Breast epithelium (tissue), 4 donors: ENCODE measurements at regions of chr14 and their contacts with region 1.

Region 1: DNA sequence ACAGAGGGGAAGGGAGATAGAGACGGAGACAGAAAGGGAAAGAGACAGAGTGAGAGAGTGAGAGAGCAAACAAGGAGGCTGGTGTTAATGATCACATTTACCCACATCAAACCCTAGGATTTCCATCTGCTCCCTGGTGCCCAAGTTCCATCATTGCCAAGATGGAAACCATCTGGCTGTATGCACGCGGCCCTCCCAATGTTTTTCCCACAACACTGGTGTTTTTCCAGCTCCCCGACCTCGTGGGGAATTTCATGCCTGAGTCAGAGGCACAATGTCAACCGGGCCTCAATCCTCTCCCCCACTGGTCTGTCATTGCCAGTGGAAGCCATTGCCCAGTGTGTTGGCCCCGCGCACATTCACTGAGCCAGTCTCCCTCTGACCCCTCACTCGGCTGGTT is 19.9 kb upstream of the BDKRB2 start:
- DNase-seq: no peak
- H3K4me3 ChIP-seq: no peak overlapping the region
- H3K27ac ChIP-seq: no peak overlapping the region
- H3K4me1 ChIP-seq: no peaks in the 10 kb centered on the region
- H3K27me3 ChIP-seq: no peaks in the 10 kb centered on the region
- CTCF ChIP-seq: no peak
- POLR2A ChIP-seq: no peak

Region 2: DNA sequence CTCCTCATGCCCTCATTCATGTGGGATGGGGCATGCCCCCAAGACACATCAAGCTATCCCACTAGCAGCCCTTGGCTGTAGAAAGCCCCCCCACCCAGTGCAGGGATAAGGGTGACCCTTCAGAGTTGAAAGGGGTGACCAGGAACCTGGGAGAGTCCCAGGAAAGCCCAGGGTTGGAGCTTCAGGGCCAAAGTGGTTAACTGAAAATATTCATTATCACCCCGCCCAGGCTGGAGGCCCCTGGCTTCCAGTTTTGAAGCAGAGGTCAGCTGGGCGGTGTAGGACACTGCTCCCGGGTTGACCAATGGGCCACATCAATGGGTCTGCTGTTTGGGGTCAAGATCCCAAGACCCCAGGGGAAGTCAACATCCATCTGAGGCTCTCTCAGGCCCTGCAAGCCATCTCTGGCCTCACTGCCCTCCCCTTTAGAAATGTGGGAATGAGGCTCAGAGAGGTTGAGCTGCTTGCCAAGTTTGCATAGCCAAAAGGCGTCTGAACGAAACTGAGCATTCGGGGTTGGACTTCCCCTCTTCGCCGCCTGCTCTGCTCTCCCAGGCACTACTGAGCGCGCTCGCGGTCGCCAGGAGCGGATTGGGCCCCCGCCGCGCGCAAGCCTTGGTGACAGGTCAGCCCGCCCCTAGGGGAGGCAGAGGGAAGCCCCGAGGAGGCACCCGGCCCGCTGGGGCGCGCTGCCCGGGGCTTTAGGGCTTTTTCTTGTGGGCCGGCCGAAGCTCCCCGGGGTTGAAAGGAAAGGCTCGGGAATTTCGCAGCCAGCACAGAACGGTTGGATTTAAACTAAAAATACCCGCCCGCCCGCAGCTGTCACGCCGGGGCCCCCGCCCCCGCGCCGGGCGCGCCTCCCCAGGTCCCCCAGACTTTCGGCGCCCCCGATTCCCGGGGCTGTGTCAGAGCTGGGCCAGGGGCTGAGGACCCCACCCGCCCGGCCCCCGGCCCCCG is 668.9 kb before region 1 on chr14:
- intact Hi-C with region 1: loop called (anchors 5 kb)
- DNase-seq: peak in 1 of 2 donors; percentile 40
- H3K4me3 ChIP-seq: peak overlapping the region; percentile 79 to 94 (median 81)
- H3K27ac ChIP-seq: peak overlapping the region; percentile 79 to 93
- H3K4me1 ChIP-seq: peaks cover 11 to 19% of the 10 kb centered on the region in 2 donors
- H3K27me3 ChIP-seq: no peaks in the 10 kb centered on the region
- CTCF ChIP-seq: peak in 2 of 3 donors; percentile 32 to 33
- POLR2A ChIP-seq: no peak

Region 3: DNA sequence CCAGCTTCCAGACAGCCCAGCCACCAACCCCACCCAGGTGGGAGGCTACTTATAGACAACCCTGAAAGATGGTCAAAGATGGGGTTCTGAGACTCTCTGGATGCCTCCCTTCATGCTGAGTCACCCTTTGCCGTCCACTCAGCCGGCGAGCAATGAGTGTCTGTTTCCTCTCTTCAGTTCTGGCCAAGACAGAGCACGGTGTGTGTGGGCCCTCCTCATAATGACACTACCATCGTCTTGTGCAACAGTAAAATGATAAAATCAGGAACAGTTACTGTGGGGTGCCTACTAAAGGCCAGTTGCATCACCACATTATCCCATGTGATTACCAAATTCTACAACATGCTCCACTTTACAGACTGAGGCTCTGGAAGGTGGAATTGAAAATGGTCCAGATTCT is 64.3 kb after region 1 on chr14:
- intact Hi-C with region 1: loop called (anchors 2 kb)
- DNase-seq: no peak
- H3K4me3 ChIP-seq: no peak overlapping the region
- H3K27ac ChIP-seq: peak overlapping the region in 1 of 2 donors; percentile 20
- H3K4me1 ChIP-seq: no peaks in the 10 kb centered on the region
- H3K27me3 ChIP-seq: no peaks in the 10 kb centered on the region
- CTCF ChIP-seq: no peak
- POLR2A ChIP-seq: no peak